ENCODE measurements at regions of chr10 and their contacts with region 1.

Region 1: DNA sequence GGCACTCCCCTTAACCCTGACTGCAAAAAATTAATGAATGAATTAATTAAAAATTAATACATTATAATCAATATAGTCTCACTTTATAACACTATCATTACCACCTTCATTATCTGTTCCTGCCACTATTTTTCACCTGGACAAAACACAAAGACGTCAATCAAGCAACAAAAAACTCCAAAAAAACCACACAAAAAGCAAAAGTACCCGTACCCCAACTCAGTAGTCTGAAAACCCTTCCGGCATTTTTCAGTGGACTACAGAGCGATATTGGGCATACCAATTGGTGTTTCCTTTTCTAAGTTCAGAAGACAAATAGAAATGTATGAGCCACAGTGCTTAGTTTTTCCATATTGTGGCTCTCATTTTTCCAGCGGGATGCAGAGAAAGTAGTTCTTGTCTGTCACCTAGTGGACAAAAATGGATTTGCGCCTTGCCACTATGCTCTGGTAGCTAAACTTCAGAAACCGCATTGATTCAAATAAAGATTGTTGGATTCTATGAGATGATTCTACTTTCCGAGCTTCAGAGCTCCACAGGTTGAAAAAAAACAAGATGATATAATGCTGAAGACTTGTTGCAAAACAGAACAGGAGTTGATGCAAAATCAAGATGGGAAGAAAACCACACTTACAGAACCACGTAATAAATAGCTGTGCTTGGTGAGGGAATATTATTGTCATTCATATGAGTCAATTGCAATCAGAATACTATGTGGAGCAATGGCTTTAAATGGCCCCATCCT is 50.6 kb upstream of the ITGB1 start:
- DNase-seq: peak; percentile 63
- ATAC-seq: peak; percentile 29; the same call in 2 of the 3 replicates
- H3K4me3 ChIP-seq: no peak overlapping the region; a peak in 1 of 6 replicates
- H3K27ac ChIP-seq: no peak overlapping the region
- H3K4me1 ChIP-seq: peaks cover 41% of the 10 kb centered on the region
- H3K27me3 ChIP-seq: 0 out of 5 replicates have a peak, but pooled peaks cover 0 to 10% of the 10 kb centered on the region in 2 experiments
- CTCF ChIP-seq: peak; percentile 89
- EP300 ChIP-seq: no peak
- POLR2A ChIP-seq: no peak
- RAD21 ChIP-seq: peak; percentile 91

Region 2: GRCh38 chr10:32713560-32713959 is 295.1 kb before region 1 on chr10:
- CTCF ChIA-PET with region 1: no interaction called
- POLR2A ChIA-PET with region 1: no interaction called
- in situ Hi-C with region 1: no loop called
- intact Hi-C with region 1: loop called (anchors 1 kb)
- DNase-seq: peak; percentile 6
- ATAC-seq: peak; percentile 63; the same call in 2 of the 3 replicates
- H3K4me3 ChIP-seq: no peak overlapping the region
- H3K27ac ChIP-seq: no peak overlapping the region
- H3K4me1 ChIP-seq: no peaks in the 10 kb centered on the region
- H3K27me3 ChIP-seq: no peaks in the 10 kb centered on the region
- CTCF ChIP-seq: peak; percentile 40
- EP300 ChIP-seq: no peak
- POLR2A ChIP-seq: no peak
- RAD21 ChIP-seq: no peak

Region 3: DNA sequence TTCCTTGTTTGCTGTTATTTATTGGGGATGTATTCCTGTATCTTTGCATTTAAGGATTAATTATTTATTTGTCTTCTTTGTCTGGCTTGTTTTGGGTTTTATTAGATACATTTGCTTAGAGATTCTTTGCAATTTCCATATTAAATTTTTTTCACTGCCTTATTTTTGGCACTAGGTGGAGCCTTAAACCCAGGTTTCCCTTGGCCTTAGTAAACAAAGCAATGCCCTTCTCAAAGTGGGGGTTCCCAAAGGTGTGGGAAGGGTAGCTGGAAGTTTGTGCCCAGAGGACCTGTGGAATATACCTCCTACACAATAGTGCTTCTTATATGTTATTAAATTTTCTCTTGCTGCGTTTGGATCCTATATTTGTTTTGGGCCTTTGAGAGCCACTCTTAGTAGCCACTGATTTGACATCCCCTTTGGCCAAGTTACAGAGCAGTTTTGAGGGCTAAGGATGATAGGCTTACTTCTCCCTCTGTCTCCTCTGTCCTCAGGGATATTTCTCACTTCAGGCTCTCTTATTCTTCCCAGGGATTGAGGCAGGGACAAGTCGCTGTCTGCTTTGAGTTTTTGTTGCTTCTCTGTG is 213.0 kb before region 1 on chr10:
- CTCF ChIA-PET with region 1: interaction called, 41 read pairs
- POLR2A ChIA-PET with region 1: no interaction called
- in situ Hi-C with region 1: loop called (anchors 5 kb)
- intact Hi-C with region 1: loop called (anchors 1 kb)
- DNase-seq: peak; percentile 13
- ATAC-seq: peak; percentile 46; the same call in 2 of the 3 replicates
- H3K4me3 ChIP-seq: no peak overlapping the region
- H3K27ac ChIP-seq: no peak overlapping the region
- H3K4me1 ChIP-seq: no peaks in the 10 kb centered on the region
- H3K27me3 ChIP-seq: no peaks in the 10 kb centered on the region
- CTCF ChIP-seq: peak; percentile 76
- EP300 ChIP-seq: no peak
- POLR2A ChIP-seq: no peak
- RAD21 ChIP-seq: peak; percentile 46; the same call in 1 of the 2 replicates

Region 4: DNA sequence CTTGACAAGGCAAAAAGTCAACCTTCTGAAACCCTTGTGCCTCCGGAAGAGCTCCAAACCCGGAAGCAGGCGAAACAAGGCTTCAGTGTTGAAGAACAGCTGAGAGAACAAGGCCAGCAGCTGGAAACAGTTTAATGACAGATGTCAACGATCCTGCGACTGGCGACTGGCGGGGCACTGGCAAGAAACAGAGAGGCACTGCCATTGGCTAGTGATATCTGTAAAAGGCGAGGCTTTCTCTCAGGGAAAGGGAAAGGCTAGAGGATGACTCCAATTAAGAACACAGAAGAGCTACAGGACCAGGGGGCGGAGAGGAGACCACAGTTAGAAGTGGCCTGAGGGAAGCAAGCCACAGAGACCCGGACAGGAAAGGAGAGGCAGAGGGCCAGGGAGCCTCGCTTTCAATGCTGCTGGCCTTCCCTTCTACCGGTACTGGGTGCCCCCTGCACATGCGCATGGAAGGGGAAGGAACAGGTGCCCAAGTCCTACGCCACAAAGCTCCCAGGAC is 70.1 kb before region 1 on chr10:
- CTCF ChIA-PET with region 1: no interaction called
- POLR2A ChIA-PET with region 1: interaction called, 3 read pairs
- in situ Hi-C with region 1: no loop called
- intact Hi-C with region 1: loop called (anchors 2 kb)
- DNase-seq: peak; percentile 83
- ATAC-seq: peak; percentile 83
- H3K4me3 ChIP-seq: peak overlapping the region in 1 of 3 experiments; percentile 45; a peak in 2 of 6 replicates
- H3K27ac ChIP-seq: peak overlapping the region; percentile 30
- H3K4me1 ChIP-seq: peaks cover 59% of the 10 kb centered on the region
- H3K27me3 ChIP-seq: no peaks in the 10 kb centered on the region
- CTCF ChIP-seq: no peak
- EP300 ChIP-seq: no peak
- POLR2A ChIP-seq: no peak
- RAD21 ChIP-seq: no peak

Region 5: DNA sequence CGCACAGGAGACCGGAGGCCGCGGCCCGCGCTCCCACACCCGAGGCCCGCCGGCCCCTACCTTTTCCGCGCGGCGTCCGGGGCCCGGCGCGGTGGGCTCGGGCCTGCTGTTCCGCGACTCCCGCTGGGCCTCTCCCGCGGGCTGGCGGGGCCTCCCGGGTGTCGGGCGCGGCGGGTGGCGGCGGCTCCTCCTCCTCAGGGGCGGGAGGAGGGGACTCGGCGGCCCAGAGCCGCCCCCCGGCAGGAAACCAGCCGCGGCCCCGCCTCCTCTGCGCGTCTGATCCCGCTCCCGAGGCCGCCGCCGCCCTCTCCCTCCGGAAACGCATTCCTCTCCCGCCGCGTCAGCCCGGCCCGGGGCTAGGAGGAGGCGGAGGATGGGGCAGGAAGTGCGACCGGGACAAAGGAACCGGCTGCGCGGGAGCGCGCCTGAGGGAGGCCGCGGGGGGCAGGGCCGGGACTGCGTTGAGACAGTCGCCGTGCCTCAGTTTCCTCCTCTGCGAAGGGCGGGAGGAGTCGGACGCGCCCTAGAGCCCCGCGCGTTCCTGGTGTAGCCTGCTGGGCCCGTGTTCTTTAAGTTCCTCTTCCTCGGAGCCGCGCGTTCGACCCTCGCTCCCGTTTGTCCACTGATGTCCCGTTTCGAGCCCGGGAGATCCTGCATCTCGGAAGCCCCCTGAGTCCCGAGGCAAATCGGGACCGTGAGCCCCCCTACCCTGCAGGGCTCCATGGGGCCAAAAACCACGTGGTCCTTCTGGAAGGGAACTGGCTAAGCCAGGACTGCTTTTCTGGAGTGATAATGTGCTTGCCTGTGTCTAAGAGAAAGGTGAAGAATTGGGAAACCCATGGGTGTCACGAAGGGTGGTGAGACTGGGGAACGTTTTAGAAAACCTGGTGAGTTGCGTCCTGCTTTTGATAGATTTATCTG is 50.3 kb before region 1 on chr10 and contains the start of gene ITGB1:
- CTCF ChIA-PET with region 1: no interaction called
- POLR2A ChIA-PET with region 1: no interaction called
- in situ Hi-C with region 1: loop called (anchors 5 kb)
- intact Hi-C with region 1: loop called (anchors 1 kb)
- DNase-seq: peak; percentile 86
- ATAC-seq: peak; percentile 93
- H3K4me3 ChIP-seq: peak within 1 kb of the TSS; percentile 91 to 95 (median 95)
- H3K27ac ChIP-seq: peak within 1 kb of the TSS; percentile 96
- H3K4me1 ChIP-seq: peaks cover 56% of the 10 kb centered on the region
- H3K27me3 ChIP-seq: no peaks in the 10 kb centered on the region; a peak in 1 of 5 replicates
- CTCF ChIP-seq: 0 out of 2 replicates have a peak, but pooled peaks have one; percentile 6
- EP300 ChIP-seq: peak in 1 of 2 experiments; percentile 52; a peak in 1 of 4 replicates
- POLR2A ChIP-seq: peak; percentile 93 to 94
- RAD21 ChIP-seq: peak; percentile 37; the same call in 1 of the 2 replicates
- total RNA-seq, gene ITGB1: 123 and 190 TPM in 2 replicates

Region 6: DNA sequence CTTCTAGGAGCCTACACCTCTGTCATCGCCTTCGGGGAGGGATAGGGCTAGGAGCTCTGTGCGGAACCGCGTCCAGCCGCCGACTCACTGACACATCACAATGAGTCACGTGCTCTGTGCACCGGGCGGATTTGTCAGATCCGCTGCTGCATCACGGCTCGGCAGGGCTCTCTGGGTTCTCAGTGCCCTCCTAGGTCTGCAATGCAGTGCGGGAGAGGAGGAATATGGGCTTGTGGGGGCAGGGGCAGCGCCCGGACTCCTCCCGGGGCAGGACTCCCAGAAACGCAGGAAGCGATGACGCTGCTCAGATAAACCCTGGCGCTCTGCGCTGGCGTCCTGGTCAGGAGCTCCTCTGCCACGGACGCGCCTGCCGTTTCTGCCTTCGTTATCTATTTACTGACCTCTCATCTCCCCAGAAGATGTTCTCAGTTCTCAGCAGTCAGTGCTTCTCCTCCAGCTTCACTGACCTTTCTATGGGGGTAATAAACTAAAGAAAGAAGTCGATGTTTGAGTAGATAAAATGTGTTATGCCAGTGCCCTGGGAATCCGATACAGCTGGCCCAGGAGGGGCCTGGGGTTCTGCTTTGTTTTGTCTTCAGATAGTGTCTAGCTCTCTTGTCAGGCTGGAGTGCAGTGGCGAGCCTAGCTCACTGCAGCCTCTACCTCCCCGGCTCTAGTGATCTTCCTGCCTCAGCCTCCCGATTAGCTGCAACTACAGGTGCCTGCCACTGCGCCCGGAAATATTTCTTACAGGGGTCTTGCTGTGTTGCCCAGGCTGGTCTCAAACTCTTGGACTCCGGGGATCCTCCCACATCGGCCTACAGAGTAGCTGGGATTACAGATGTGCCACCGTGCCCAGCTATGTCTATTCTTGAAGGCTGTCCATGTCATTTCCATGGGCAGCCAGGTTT is 27.9 kb before region 1 on chr10:
- CTCF ChIA-PET with region 1: no interaction called
- POLR2A ChIA-PET with region 1: interaction called, 16 read pairs
- in situ Hi-C with region 1: no loop called
- intact Hi-C with region 1: loop called (anchors 2 kb)
- DNase-seq: peak; percentile 87
- ATAC-seq: peak; percentile 92
- H3K4me3 ChIP-seq: peak overlapping the region; percentile 61 to 79 (median 67)
- H3K27ac ChIP-seq: peak overlapping the region; percentile 70
- H3K4me1 ChIP-seq: peaks cover 49% of the 10 kb centered on the region
- H3K27me3 ChIP-seq: no peaks in the 10 kb centered on the region; a peak in 1 of 5 replicates
- CTCF ChIP-seq: 0 out of 2 replicates have a peak, but pooled peaks have one; percentile 2
- EP300 ChIP-seq: no peak; a peak in 1 of 4 replicates
- POLR2A ChIP-seq: peak; percentile 72
- RAD21 ChIP-seq: peak; percentile 51

Region 7: DNA sequence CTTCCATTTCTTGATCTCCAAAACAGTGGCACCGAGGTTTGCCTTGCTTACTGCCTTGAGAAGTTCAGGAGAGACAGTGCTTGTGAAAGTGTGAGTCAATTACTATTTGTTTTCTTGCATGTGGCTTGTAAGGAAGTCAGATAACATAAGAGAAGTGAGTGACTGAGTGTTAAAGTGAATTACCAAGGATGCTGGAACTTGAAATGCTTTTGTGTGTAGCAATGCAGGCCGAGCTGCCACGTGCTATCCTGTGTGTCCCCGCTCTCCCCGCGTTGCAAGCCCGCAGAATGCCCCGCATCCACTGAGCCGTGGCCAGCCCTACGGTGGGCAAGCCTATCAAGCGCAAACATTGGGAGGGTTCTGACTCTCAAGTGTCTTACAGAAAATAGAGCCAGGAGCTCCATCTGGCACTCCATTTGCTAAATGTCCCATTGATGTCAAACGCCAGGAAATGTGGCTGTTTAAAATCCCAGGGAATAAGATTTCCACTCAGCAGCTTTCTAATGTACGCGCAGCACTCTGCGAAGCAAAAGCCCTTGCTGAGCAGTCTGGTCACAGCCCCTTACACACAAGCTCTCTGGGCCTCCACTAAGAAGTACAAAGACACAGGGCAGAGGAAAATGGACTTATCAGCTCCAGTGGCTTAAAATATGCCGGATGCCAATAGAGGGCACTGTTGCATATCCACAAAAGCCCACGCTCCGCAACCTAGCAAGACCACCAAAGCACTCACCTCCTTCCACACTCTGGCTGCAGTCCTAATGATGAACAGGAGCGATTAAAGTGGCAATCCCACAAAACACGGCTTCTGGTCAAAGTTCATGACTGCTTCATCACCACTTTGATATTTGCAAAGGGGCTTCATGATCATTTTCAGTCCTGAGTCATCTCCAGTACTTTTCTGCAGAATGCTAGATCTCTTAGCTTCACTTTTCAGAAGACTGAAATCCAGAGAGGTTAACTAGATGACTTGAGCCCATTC is 107.4 kb after region 1 on chr10:
- CTCF ChIA-PET with region 1: no interaction called
- POLR2A ChIA-PET with region 1: no interaction called
- in situ Hi-C with region 1: no loop called
- intact Hi-C with region 1: no loop called
- DNase-seq: peak; percentile 53
- ATAC-seq: peak; percentile 80
- H3K4me3 ChIP-seq: no peak overlapping the region
- H3K27ac ChIP-seq: no peak overlapping the region
- H3K4me1 ChIP-seq: peaks cover 10% of the 10 kb centered on the region
- H3K27me3 ChIP-seq: peaks cover 0 to 14% of the 10 kb centered on the region in 2 experiments; a peak in 2 of 5 replicates
- CTCF ChIP-seq: peak; percentile 84
- EP300 ChIP-seq: no peak
- POLR2A ChIP-seq: no peak
- RAD21 ChIP-seq: peak; percentile 19; the same call in 1 of the 2 replicates

Region 8: DNA sequence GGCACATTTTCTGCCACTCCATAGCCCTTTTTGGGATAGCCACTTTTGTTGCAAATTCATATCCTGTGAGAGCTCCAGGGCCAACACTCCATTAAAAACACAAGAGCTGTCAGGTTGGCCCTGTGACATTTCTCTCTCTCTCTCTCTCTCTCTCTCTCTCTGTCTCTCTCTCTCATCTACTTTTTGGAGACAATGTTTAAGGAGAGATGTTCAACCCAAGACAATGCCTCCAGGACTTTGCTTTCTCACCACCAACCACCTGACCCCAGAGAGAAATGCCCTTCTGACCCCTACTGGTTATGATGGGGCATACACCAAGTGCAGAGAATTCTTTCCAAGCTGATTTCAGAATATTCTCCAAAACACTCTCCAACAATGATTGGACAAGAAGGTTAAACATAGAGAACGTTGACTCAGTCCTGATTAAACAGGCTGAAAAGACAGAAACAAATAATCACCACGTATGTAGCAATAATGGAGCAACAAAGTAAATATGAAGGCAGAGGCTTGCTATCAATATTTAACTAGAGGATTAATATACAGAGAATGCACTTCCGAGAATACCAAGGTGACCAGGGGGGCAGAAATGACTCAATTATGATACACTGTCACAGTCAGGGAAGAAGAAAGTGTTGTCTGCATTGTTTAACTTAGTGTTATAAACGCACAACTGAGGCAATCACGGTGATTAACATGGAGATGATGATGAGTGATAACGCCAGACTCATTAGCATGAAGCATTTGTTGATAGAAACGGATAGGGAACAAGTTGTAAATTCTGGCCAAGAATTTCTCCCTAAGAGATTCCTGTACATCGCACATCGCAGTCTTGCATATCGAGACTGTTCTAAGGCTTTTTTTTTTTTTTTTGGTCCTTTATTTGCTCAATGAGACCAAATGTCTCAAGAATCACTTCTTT is 147.3 kb after region 1 on chr10:
- CTCF ChIA-PET with region 1: interaction called, 10 read pairs
- POLR2A ChIA-PET with region 1: no interaction called
- in situ Hi-C with region 1: no loop called
- intact Hi-C with region 1: loop called (anchors 1 kb)
- DNase-seq: peak; percentile 99
- ATAC-seq: peak; percentile 96
- H3K4me3 ChIP-seq: no peak overlapping the region
- H3K27ac ChIP-seq: no peak overlapping the region
- H3K4me1 ChIP-seq: peaks cover 56% of the 10 kb centered on the region
- H3K27me3 ChIP-seq: no peaks in the 10 kb centered on the region
- CTCF ChIP-seq: peak; percentile 87
- EP300 ChIP-seq: peak; percentile 90 to 100
- POLR2A ChIP-seq: no peak
- RAD21 ChIP-seq: peak; percentile 50; the same call in 1 of the 2 replicates

Measured in HepG2 (cell line).